Tibial artery (tissue), 4 donors: ENCODE measurements at regions of chr2 and their contacts with region 1.

Region 1: DNA sequence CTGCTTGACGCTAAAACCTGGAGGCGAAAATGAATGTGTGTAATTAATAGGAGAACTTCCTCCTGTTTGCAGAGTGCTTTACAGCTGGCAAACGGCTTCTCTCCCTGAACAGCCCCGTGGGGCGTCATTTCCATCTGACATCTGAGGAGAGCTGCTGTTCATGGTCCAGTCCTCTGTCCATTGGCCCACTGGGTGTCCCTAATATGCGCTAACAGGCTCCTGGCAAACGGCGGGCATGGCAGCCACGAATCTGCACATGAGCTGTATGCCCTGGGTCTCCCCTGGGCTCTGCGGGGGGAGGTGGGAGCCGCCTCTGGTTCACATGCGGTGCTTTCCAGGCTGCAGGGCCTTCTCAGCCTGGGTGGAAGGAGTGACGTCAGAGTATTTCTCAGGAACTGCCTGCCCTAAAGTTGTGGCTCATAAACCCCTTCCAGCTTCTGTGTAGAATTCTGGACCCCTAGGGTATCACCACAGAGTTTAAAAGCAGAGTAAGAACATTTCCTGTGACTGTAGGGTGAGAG is 73.2 kb downstream of the LRRFIP1 start:
- DNase-seq: peak; percentile 76 to 94
- H3K4me3 ChIP-seq: peak overlapping the region in 1 of 2 donors; percentile 28
- H3K27ac ChIP-seq: peak overlapping the region; percentile 97 to 99
- H3K4me1 ChIP-seq: peaks cover 0 to 100% (median 90%) of the 10 kb centered on the region in 4 donors
- H3K27me3 ChIP-seq: no peaks in the 10 kb centered on the region
- CTCF ChIP-seq: no peak

Region 2: DNA sequence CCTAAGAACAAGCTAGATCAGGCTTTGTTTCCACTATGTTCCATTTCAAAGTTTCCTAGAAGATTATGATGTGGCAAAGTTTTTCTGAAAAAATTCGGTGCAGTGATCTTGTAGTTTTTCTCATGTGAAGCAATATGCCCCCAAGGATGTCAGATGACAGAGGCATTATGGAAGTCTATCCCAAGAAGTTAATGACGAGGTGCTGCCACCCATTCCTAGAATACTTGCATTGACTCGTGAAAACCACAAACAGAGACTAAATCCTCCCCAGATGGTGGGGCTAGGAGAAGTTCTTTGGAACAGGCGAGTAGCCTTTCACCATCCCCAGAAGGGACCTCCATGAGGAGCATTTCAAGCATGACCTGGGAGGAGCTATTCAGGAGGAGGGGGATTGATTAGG is 655.1 kb before region 1 on chr2:
- intact Hi-C with region 1: no loop called
- DNase-seq: no peak
- H3K4me3 ChIP-seq: no peak overlapping the region
- H3K27ac ChIP-seq: no peak overlapping the region
- H3K4me1 ChIP-seq: no peaks in the 10 kb centered on the region
- H3K27me3 ChIP-seq: no peaks in the 10 kb centered on the region
- CTCF ChIP-seq: no peak

Region 3: GRCh38 chr2:237421542-237422116 is 278.9 kb before region 1 on chr2:
- intact Hi-C with region 1: no loop called
- DNase-seq: peak; percentile 79 to 89
- H3K4me3 ChIP-seq: peak overlapping the region; percentile 15 to 33
- H3K27ac ChIP-seq: peak overlapping the region; percentile 47 to 58
- H3K4me1 ChIP-seq: peaks cover 0 to 12% (median 7%) of the 10 kb centered on the region in 4 donors
- H3K27me3 ChIP-seq: no peaks in the 10 kb centered on the region
- CTCF ChIP-seq: peak; percentile 83 to 90

Region 4: DNA sequence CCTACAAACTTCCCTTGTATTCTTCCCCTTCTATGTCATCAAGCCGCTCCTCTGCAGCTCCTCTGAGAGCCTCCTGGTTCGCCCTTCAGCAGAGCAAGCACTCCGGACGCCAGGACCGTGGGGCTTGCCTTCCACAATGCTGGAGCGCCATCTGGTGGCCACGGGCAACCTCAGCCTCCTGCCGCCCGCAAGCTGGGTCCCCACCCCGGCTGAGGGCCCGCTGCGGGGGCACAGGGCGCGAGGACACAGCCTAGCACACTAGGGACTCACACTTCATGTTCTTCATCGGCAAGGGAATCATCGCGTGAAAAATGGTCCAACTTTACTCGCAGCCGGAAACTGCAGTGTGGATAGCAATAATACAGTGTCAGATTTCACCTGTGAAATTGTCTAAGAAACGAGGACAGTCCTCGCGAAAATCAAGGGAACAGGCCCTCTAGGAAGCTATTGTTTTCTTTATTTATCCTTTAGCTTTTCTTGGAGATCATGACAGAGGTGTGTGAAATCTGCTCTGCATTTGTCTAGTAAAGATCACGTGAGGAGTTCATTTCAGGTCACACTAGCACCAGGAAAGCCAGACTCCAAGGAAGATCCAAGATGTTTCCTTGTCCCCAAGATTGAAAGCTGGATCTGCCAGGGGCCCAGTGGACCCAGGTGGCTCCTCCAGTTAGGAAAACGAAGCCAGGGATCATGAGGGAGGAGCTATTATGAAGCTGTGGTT is 128.4 kb before region 1 on chr2:
- intact Hi-C with region 1: no loop called
- DNase-seq: peak; percentile 88 to 93
- H3K4me3 ChIP-seq: no peak overlapping the region
- H3K27ac ChIP-seq: no peak overlapping the region
- H3K4me1 ChIP-seq: peaks cover 0 to 20% (median 6%) of the 10 kb centered on the region in 4 donors
- H3K27me3 ChIP-seq: no peaks in the 10 kb centered on the region
- CTCF ChIP-seq: peak; percentile 98 to 99

Region 5: DNA sequence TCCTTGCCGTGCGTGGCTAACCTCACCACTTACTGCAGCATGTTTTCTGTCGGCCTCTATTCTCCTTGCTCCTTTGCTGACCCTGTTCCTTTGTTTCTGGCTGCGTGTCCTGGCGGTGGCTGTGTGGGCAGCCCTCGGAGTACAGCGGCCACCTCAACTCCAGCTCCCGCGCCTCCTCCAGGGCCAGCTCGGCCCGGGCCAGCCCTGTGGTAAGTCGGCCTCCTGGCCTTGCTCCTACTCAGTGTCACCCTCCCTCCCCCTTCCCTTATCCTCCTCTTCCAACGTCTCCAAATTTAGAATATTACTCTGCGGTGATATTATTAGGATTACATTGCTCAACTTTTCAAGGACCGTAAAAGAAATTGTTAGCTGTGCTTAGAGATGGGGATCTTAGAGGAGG is 38.5 kb after region 1 on chr2:
- intact Hi-C with region 1: loop called (anchors 5 kb)
- DNase-seq: peak; percentile 79 to 94
- H3K4me3 ChIP-seq: peak overlapping the region in 1 of 2 donors; percentile 16
- H3K27ac ChIP-seq: peak overlapping the region; percentile 68 to 77
- H3K4me1 ChIP-seq: peaks cover 0 to 86% (median 54%) of the 10 kb centered on the region in 4 donors
- H3K27me3 ChIP-seq: no peaks in the 10 kb centered on the region
- CTCF ChIP-seq: peak; percentile 18

Region 6: DNA sequence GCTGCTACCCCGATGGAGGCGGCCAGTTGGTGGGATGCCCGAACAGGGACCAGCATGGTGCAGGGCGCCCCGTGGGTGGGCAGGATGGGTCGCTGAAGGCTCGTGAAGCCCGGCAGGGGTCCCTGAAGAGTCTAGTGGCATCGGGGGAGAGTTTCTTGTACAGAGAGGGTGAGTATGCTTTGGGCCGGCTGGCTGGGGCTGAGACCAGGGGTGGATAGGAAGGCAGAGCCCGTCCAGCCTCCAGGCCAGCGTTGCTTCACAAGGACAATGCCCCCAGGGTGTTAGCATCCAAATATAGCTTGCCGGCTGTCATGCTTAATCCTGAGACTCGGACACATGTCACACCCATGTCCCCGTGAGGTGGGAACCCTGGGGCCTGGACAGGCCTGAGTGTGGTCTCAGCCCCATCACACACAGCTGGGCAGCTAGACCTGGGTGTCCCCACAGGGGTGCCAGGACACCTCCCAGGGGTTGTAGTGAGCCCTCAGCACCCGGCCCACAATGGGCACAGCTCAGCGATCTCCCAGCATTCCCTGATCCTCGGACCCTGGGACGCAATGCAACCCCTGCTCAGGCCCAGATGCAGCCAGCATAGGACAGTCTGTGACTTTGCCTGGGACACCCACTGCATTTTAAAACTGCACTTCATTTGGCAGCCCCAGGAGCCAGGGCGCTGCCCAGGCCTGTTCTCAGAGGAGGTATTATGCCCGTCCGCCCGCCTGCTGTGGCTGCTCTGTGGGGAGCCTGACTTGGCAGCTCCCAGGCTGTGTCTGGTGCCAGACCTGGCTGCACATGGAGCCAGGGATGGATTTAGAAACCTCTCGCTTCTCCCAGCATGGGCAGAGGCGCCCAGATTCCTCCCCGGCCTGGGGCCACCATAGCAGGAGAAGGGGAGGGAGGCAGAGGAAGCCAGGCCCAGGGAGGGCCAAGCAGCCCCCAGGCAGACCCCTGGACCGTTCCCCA is 195.3 kb after region 1 on chr2:
- intact Hi-C with region 1: loop called (anchors 10 kb)
- DNase-seq: peak; percentile 77 to 94
- H3K4me3 ChIP-seq: no peak overlapping the region
- H3K27ac ChIP-seq: peak overlapping the region; percentile 94 to 99
- H3K4me1 ChIP-seq: peaks cover 0 to 94% (median 60%) of the 10 kb centered on the region in 4 donors
- H3K27me3 ChIP-seq: no peaks in the 10 kb centered on the region
- CTCF ChIP-seq: no peak